ENCODE measurements at regions of chr21 and their contacts with region 1.

Region 1: DNA sequence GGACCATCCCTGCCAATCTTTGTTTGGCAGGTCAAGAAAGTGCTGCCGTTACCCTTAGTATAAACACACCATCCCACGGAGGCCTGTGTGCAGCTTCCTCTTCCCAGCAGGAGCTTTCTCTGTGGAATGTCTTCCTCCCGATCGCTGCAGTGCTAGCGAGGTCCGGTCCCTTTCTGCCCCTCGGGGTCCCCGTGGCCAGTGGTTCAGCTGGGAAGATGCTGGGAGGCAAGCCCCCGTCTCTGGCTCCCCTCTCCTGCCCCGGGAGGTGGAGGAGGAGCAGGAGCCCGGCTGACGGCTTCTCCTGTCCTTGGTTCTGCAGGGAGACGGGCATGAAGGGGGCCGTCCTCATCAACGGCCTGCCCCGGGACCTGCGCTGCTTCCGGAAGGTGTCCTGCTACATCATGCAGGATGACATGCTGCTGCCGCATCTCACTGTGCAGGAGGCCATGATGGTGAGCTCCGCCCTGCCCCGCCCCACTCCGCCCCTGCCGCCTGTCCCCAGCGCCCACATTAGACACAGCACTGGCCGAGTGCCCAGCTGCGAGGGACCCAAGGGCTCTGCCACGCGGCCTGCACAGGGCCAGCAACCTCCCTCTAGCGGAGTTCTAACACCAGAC is 42.1 kb downstream of the TFF3 start:
- DNase-seq: no peak
- H3K4me3 ChIP-seq: no peak overlapping the region
- CTCF ChIP-seq: no peak

Region 2: GRCh38 chr21:42258153-42258884 is 14.8 kb before region 1 on chr21:
- CTCF ChIA-PET with region 1: interaction called, 14 read pairs
- POLR2A ChIA-PET with region 1: no interaction called
- DNase-seq: no peak
- H3K4me3 ChIP-seq: no peak overlapping the region
- CTCF ChIP-seq: peak; percentile 81

Region 3: GRCh38 chr21:42878993-42879787 is 606.1 kb after region 1 on chr21 and contains the start of gene WDR4:
- CTCF ChIA-PET with region 1: no interaction called
- POLR2A ChIA-PET with region 1: no interaction called
- DNase-seq: peak; percentile 63
- H3K4me3 ChIP-seq: peak within 1 kb of the TSS; percentile 93
- CTCF ChIP-seq: no peak

Measured in AG04449 (cell line).